RWPE1 (cell line): ENCODE measurements at regions of chr9 and their contacts with region 1.

Region 1: DNA sequence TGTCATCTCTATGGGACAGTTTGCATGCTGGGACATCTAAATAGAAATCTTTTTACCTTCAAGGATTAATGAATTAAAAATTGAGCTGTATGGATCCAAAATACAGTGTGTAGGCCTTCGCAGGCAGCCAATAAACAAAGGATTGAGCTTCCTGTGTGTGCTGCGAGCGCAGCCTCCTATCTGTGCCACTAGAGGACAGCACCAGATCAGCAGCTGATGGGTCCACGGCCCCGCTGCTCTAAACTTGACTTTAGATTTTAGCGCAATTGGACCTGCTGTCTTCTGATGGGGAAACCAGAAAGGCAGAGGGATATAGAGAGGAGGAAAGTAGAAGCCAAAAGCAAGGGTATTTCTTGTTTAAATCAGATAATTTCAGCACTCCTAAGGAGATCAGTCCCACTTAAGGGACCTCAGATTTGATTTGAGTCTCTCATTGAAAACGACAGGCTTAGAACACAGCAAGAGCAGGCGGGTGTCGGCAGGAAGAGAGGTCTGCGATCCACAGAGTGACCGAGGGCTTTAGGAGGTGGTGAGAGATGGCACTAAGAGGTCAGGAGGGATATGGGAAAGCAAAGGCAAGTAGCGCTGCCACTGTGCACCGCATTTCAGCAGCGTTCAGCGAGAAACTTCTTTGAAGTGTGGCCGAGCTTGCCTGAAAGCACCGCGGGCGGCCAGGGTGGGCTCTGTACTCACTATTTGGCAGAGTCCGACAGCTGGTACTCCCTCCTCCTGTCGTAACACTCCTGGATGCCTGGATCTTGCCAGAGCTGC is 214.3 kb downstream of the GNA14 start:
- DNase-seq: peak; percentile 80
- H3K27ac ChIP-seq: no peak overlapping the region
- CTCF ChIP-seq: peak; percentile 98

Region 2: DNA sequence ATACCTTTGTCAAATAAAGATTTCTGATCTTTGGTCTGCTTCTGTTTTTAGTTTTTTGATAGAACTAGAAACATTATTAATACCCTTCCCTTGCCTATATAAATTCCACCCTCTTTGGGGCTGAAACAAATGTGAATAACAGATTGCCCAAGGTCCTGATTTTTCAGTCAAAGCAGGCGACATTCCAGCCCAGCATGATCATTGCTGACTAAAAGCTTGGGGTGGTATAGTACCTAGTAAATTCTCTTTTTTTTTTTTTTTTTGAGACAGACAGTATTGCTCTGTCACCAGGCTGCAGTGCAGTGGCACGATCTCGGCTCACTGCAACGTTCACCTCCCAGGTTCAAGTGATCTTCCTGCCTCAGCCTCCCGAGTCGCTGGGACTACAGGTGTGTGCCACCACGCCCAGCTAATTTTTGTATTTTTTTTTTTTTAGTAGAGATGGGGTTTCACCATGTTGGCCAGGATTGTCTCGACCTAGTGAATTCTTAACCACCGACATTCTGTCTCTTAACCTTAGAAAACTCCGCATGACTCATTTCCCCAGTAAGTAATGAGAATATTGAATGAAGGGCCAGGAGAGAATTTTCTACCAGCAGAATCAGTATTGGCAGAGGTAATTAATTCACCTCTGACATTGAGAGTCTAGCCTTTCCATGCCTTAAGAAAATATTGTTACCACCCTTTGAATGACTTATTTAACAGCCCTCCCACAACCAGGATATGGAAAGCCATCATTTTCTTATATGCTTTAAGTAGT is 12.2 kb before region 1 on chr9:
- CTCF ChIA-PET with region 1: interaction called, 13 read pairs
- POLR2A ChIA-PET with region 1: interaction called, 3 read pairs
- DNase-seq: no peak
- H3K27ac ChIP-seq: no peak overlapping the region
- CTCF ChIP-seq: no peak

Region 3: GRCh38 chr9:77449255-77450039 is 15.6 kb after region 1 on chr9:
- CTCF ChIA-PET with region 1: interaction called, 38 read pairs
- POLR2A ChIA-PET with region 1: no interaction called
- DNase-seq: peak; percentile 91
- H3K27ac ChIP-seq: peak overlapping the region; percentile 56
- CTCF ChIP-seq: no peak

Region 4: GRCh38 chr9:77488439-77489126 is 54.7 kb after region 1 on chr9:
- CTCF ChIA-PET with region 1: interaction called, 17 read pairs
- POLR2A ChIA-PET with region 1: no interaction called
- DNase-seq: peak; percentile 30
- H3K27ac ChIP-seq: no peak overlapping the region
- CTCF ChIP-seq: peak; percentile 37

Region 5: DNA sequence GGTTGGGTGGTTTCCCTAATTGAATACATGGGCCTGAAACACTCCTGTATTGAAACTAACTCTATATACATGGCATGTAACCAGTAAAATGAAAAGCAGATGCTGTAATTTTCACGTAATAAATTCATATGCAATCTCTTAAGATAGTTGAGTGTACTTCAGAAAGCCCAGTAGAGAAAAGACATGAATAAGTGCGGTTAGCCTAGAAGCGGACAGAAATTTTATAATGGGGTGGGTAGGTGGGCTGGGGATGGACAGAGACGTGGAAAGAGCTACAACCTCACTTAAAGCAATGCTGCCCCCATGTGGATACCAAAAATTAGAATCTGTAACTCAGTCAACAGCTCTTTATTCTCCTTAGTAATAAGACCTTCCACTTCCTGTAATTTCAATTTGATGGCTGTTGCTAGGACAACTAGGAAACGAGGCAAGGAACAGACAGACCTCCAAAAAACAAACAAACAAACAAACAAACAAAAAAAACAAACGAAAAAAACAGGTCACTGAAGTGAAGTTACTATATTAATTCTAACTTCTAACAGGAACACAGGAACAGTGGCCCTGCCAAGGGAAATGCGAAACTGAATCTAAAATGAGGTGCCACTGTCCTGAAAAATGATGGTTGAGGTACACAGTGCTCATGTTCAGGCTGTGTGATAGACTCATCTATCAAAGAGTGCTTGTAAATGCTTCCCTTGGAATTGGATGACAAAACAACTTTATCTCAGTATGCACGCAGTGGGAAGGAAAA is 317.7 kb after region 1 on chr9:
- CTCF ChIA-PET with region 1: interaction called, 10 read pairs
- POLR2A ChIA-PET with region 1: no interaction called
- DNase-seq: peak; percentile 25
- H3K27ac ChIP-seq: no peak overlapping the region
- CTCF ChIP-seq: peak; percentile 47; the same call in 1 of the 2 replicates